ENCODE measurements at regions of chr4 and their contacts with region 1.

Region 1: GRCh38 chr4:154634058-154634457 is 21.6 kb upstream of the FGG start:
- DNase-seq: no peak
- H3K4me3 ChIP-seq: no peak overlapping the region
- H3K27ac ChIP-seq: no peak overlapping the region
- H3K4me1 ChIP-seq: peaks cover 11% of the 10 kb centered on the region
- H3K27me3 ChIP-seq: no peaks in the 10 kb centered on the region
- CTCF ChIP-seq: no peak

Region 2: GRCh38 chr4:154586296-154587033 is 47.6 kb before region 1 on chr4:
- CTCF ChIA-PET with region 1: no interaction called
- dilution Hi-C with region 1: no loop called
- in situ Hi-C with region 1: no loop called
- intact Hi-C with region 1: no loop called
- DNase-seq: no peak
- H3K4me3 ChIP-seq: no peak overlapping the region
- H3K27ac ChIP-seq: no peak overlapping the region
- H3K4me1 ChIP-seq: no peaks in the 10 kb centered on the region
- H3K27me3 ChIP-seq: no peaks in the 10 kb centered on the region
- CTCF ChIP-seq: no peak

Region 3: GRCh38 chr4:154597798-154598774 is 36.0 kb before region 1 on chr4:
- CTCF ChIA-PET with region 1: interaction called, 11 read pairs
- dilution Hi-C with region 1: no loop called
- in situ Hi-C with region 1: no loop called
- intact Hi-C with region 1: no loop called
- DNase-seq: no peak
- H3K4me3 ChIP-seq: no peak overlapping the region
- H3K27ac ChIP-seq: no peak overlapping the region
- H3K4me1 ChIP-seq: peaks cover 10% of the 10 kb centered on the region
- H3K27me3 ChIP-seq: no peaks in the 10 kb centered on the region
- CTCF ChIP-seq: no peak